ENCODE measurements at regions of chr2 and their contacts with region 1.

Region 1: DNA sequence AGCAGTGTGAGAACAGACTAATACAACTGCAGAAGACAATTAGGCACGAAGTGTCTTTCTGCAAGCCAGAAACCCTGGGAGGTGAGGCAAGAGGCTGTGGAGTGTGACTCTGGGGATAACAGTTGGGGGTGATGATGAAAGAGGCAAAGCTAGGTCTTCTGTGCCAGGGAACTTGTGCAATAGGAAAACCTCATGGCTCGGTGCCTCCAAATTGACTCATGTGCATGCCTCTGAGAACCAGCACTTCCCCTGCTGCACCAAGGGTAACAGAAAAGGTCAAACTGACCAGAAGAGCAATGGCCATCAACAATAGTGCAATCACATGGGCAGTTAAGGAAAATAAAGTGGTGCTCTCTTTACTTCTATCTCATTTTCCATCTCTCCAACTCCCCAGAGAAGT is 136.4 kb downstream of the SCG2 start:
- DNase-seq: peak; percentile 81
- ATAC-seq: peak; percentile 95

Region 2: DNA sequence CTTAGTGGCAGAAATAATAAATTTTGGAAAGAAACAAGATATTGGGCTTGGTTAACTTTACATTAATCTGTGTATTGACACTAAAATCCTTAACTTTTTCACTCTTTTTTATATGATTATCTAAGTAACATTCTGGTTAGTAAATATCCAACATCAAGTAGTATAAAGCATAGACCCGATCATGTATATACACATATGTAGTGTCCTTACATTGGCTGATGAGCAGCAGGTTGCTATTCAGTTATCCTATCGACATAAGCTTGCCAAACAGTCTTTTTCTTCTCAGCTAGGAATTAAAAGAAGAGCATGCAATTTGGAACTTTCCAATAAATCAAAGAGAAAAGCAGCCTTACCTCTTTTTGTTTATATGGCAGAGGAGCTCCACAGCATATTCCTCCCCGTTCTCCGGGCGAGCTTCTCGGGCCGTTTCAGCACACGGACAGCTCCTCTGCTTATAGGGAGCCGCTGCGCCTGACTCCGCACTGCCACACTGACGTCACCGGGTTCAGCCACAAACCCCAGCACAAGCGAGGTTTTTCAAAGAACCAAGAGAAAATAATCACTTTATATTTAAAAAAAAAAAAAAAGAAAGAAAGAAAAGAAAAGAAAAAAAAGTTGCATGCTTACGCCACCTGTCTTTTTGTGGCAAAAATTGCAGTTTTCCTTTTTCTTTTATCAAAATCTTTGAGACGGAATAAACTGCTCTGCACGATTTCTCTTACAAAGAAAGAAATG is 136.3 kb after region 1 on chr2 and contains the start of gene SCG2:
- intact Hi-C with region 1: loop called in 1 of 2 experiments (anchors 10 kb)
- DNase-seq: peak; percentile 75
- ATAC-seq: peak; percentile 92 to 97
- total RNA-seq, gene SCG2: 0.41 to 0.42 TPM